ENCODE measurements at regions of chr12 and their contacts with region 1.

Region 1: GRCh38 chr12:53213348-53213747 is 6.3 kb upstream of the ITGB7 start:
- DNase-seq: peak; percentile 92
- ATAC-seq: peak; percentile 70
- H3K4me3 Mint-ChIP-seq: no peak overlapping the region
- H3K27ac Mint-ChIP-seq: no peak overlapping the region
- H3K4me1 Mint-ChIP-seq: peaks cover 62% of the 10 kb centered on the region
- H3K27me3 Mint-ChIP-seq: no peaks in the 10 kb centered on the region

Region 2: DNA sequence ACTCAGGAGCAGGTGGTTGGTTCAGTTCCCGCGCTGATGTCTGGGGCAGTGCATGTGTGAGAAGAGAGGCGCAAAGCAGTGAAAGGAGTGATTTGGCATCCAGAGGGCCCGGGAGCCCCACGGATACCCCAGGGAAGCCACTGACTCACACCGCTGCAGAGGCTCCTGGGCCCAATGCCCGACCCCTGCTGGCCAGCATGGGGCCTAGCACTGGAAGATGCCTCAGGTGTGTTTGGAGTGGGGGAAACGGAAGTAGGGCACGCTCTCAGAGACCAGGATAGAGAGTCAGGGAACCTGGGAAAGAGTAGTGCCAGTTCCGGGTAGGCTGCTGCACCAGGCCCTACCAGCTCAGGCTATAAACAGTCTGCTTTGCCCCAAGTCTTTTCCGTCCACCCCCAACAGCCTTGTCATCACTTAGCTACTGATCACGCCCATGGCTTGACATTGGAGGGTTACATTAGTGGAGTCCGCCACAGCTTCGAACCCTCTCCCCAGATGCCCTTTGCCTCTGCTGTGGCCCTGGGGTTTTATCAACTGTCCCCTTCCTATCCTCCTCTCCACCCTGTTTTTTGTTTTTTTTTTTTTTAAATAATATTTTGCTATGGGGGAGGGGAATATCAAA is 23.1 kb before region 1 on chr12:
- CTCF ChIA-PET with region 1: interaction called, 12 read pairs
- POLR2A ChIA-PET with region 1: no interaction called
- intact Hi-C with region 1: no loop called
- DNase-seq: peak; percentile 74
- ATAC-seq: peak; percentile 94
- H3K4me3 Mint-ChIP-seq: no peak overlapping the region
- H3K27ac Mint-ChIP-seq: peak overlapping the region; percentile 17
- H3K4me1 Mint-ChIP-seq: peaks cover 14% of the 10 kb centered on the region
- H3K27me3 Mint-ChIP-seq: no peaks in the 10 kb centered on the region

Region 3: DNA sequence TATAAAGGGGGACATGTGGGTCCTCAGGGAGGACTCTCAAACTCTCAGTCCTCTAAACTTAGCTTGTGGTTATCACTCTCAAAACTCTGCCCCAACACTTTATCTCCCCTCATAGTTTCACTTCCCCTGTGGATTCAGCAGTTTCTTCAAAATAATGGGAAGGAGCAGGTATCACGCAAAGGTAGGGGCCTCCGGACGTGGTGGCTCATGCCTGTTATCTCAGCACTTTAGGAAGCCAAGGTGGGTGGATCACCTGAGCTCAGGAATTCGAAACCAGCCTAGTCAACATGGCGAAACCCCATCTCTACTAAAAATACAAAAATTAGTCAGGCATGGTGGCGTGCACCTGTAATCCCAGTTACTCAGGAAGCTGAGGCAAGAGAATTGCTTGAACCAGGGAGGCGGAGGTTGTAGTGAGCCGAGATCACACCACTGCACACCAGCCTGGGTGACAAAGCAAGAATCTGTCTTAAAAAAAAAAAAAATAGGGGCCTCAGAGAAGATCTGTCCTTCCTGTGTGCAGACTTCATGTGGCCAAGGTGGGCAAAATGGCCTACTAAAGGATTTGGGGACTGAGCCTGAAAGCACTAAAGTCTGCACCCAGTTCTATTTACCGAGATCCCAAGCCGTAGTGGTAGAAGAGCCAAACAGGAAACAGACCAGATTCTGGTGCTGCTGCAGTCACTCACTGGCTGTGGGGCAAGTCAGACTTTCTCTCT is 12.7 kb before region 1 on chr12:
- CTCF ChIA-PET with region 1: interaction called, 12 read pairs
- POLR2A ChIA-PET with region 1: interaction called, 3 read pairs
- intact Hi-C with region 1: no loop called
- DNase-seq: peak; percentile 68
- ATAC-seq: peak; percentile 52
- H3K4me3 Mint-ChIP-seq: peak overlapping the region; percentile 44
- H3K27ac Mint-ChIP-seq: peak overlapping the region; percentile 90
- H3K4me1 Mint-ChIP-seq: peaks cover 74% of the 10 kb centered on the region
- H3K27me3 Mint-ChIP-seq: no peaks in the 10 kb centered on the region

Region 4: GRCh38 chr12:53251477-53252348 is 38.4 kb after region 1 on chr12:
- CTCF ChIA-PET with region 1: interaction called, 35 read pairs
- POLR2A ChIA-PET with region 1: interaction called, 3 read pairs
- intact Hi-C with region 1: loop called (anchors 1 kb)
- DNase-seq: peak; percentile 83
- ATAC-seq: peak; percentile 91
- H3K4me3 Mint-ChIP-seq: peak overlapping the region; percentile 97
- H3K27ac Mint-ChIP-seq: peak overlapping the region; percentile 95
- H3K4me1 Mint-ChIP-seq: peaks cover 36% of the 10 kb centered on the region
- H3K27me3 Mint-ChIP-seq: no peaks in the 10 kb centered on the region

Region 5: DNA sequence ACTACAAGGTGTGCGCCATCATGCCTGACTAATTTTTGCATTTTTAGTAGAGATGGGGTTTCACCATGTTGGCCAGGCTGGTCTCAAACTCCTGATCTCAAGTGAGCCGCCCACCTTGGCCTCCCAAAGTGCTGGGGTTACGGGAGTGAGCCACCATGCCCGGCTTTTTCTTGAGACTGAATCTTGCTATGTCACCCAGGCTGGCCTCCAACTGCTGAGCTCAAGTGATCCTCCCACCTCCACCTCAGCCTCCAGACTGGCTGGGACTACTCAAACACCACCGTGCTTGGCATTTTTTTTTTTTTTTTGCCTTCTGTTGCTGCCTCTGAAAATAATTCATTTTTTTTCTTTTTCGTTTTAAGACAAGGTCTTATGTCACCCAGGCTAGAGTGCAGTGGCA is 46.5 kb after region 1 on chr12:
- CTCF ChIA-PET with region 1: interaction called, 113 read pairs
- POLR2A ChIA-PET with region 1: no interaction called
- intact Hi-C with region 1: no loop called
- DNase-seq: no peak
- ATAC-seq: no peak
- H3K4me3 Mint-ChIP-seq: no peak overlapping the region
- H3K27ac Mint-ChIP-seq: no peak overlapping the region
- H3K4me1 Mint-ChIP-seq: peaks cover 12% of the 10 kb centered on the region
- H3K27me3 Mint-ChIP-seq: no peaks in the 10 kb centered on the region

Region 6: DNA sequence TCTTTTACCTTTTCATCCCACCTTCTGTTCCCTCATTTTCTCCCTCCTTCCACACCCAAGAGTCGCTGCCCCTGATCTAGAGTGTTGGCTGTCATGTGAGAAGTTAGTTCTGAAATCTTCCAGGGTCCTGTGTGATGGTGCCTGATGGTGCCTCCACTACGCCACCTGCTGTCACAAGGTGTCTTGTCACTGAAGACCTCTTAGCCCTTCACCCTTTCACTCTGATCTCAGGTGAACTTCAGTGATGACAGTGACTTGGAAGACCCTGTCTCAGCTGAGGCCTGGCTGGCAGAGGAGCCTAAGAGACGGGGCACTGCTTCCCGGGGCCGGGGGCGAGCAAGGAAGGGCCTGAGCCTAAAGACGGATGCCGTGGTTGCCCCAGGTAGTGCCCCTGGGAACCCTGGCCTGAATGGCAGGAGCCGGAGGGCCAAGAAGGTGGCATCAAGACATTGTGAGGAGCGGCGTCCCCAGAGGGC is 74.4 kb after region 1 on chr12:
- CTCF ChIA-PET with region 1: interaction called, 173 read pairs
- POLR2A ChIA-PET with region 1: no interaction called
- intact Hi-C with region 1: loop called (anchors 1 kb)
- DNase-seq: peak; percentile 79
- ATAC-seq: peak; percentile 78
- H3K4me3 Mint-ChIP-seq: no peak overlapping the region
- H3K27ac Mint-ChIP-seq: no peak overlapping the region
- H3K4me1 Mint-ChIP-seq: peaks cover 15% of the 10 kb centered on the region
- H3K27me3 Mint-ChIP-seq: no peaks in the 10 kb centered on the region

Region 7: DNA sequence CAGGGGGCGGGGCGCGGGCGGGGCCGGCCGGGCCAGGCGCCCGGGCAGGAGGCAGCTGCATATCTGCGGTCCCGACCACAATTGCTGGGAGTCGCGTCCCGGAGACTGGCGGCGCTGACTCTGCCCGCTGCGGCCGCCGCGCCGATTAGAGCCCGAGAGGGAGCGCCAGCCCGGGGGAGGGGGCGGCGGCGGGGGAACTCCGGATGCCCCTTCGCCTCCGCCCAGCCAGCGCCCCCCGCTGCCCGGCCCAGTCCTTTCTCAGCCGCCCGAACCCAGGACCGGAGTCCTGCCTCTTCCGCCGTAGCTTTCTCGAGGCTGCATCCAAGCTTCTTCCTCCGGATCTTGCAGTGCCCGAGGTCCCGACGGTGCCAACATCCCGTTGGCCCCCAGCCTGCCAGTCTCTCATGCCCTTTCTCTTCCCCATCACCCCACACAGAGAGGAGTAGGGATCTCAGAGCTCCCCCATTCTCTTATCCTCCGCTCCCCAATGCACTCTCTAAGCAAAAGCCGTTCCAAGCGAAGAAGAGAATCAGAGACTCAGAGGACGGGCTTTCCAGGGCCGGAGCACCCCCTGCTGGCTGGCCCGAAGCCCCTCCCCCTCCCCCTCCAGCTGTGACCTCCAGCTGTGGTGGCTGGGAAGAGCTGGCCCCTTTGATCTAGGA is 131.6 kb after region 1 on chr12:
- CTCF ChIA-PET with region 1: interaction called, 14 read pairs
- POLR2A ChIA-PET with region 1: no interaction called
- intact Hi-C with region 1: loop called in 1 of 2 experiments (anchors 1 kb)
- DNase-seq: peak; percentile 88
- ATAC-seq: peak; percentile 85
- H3K4me3 Mint-ChIP-seq: peak overlapping the region; percentile 83
- H3K27ac Mint-ChIP-seq: peak overlapping the region; percentile 90
- H3K4me1 Mint-ChIP-seq: peaks cover 24% of the 10 kb centered on the region
- H3K27me3 Mint-ChIP-seq: peaks cover 2% of the 10 kb centered on the region

Measured in activated CD4-positive, alpha-beta T cell treated with anti-CD3 and anti-CD28 coated beads for 36 hours (primary cell).